ENCODE measurements at regions of chrX and their contacts with region 1.

Region 1: DNA sequence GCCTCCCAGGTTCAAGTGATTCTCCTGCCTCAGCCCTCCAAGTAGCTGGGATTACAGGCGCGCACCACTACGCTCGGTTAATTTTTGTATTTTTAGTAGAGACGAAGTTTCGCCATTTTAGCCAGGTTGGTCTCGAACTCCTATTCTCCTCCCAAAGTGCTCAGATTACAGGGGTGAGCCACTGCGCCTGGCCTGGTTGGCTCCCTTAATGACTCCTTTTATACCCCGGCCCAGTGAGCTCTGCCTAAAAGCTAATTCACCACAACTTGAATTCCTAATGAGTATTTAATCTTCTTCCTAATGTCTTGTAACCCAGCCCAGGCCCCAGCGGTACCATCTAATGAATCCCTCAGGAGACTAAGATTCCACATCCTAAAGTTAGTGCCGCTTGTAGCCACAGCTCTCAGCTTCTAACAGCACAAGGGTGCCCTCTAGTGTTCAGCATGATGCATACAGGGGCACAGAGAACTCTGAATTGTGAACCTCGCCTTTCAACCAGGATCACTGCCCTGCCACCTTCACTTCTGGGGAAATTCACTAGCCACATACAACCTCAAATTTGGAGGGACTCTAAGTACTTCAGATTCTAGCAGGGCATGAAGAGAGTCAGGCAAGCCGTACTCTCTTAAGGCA is 89.5 kb downstream of the OR13H1 start:
- DNase-seq: peak; percentile 79
- H3K4me3 Mint-ChIP-seq: no peak overlapping the region
- H3K27ac Mint-ChIP-seq: no peak overlapping the region
- H3K4me1 Mint-ChIP-seq: no peaks in the 10 kb centered on the region
- H3K27me3 Mint-ChIP-seq: peaks cover 9% of the 10 kb centered on the region
- CTCF ChIP-seq: peak; percentile 91

Region 2: GRCh38 chrX:130975947-130976346 is 657.5 kb before region 1 on chrX:
- CTCF ChIA-PET with region 1: interaction called, 6 read pairs
- POLR2A ChIA-PET with region 1: no interaction called
- intact Hi-C with region 1: loop called (anchors 1 kb)
- DNase-seq: peak; percentile 63
- H3K4me3 Mint-ChIP-seq: no peak overlapping the region
- H3K27ac Mint-ChIP-seq: no peak overlapping the region
- H3K4me1 Mint-ChIP-seq: no peaks in the 10 kb centered on the region
- H3K27me3 Mint-ChIP-seq: peaks cover 35% of the 10 kb centered on the region
- CTCF ChIP-seq: peak; percentile 65

Region 3: GRCh38 chrX:131262737-131263679 is 370.4 kb before region 1 on chrX:
- CTCF ChIA-PET with region 1: no interaction called
- POLR2A ChIA-PET with region 1: no interaction called
- intact Hi-C with region 1: loop called (anchors 1 kb)
- DNase-seq: peak; percentile 52
- H3K4me3 Mint-ChIP-seq: no peak overlapping the region
- H3K27ac Mint-ChIP-seq: no peak overlapping the region
- H3K4me1 Mint-ChIP-seq: no peaks in the 10 kb centered on the region
- H3K27me3 Mint-ChIP-seq: peaks cover 72% of the 10 kb centered on the region
- CTCF ChIP-seq: peak; percentile 45

Region 4: DNA sequence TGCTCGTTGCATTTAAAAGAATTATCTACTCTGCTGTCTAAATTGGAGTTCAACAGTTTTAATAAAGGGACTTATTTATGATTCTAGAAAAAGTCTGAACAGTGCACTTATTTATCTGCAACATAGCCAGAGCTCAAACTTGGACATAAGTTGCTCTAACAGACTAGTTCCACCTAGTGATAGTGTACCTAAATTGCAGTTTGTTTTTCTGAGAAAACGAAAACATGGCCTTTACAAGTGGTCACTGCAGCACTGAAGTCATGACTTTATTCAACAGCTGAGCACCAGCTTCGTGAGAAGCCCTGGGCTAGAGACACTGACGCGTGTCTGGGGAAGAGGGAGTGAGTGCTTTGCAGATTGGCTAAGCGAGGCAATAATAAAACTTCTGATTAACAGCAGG is 267.0 kb before region 1 on chrX:
- CTCF ChIA-PET with region 1: no interaction called
- POLR2A ChIA-PET with region 1: no interaction called
- intact Hi-C with region 1: loop called (anchors 10 kb)
- DNase-seq: peak; percentile 9
- H3K4me3 Mint-ChIP-seq: no peak overlapping the region
- H3K27ac Mint-ChIP-seq: no peak overlapping the region
- H3K4me1 Mint-ChIP-seq: no peaks in the 10 kb centered on the region
- H3K27me3 Mint-ChIP-seq: peaks cover 71% of the 10 kb centered on the region
- CTCF ChIP-seq: peak; percentile 5

Region 5: DNA sequence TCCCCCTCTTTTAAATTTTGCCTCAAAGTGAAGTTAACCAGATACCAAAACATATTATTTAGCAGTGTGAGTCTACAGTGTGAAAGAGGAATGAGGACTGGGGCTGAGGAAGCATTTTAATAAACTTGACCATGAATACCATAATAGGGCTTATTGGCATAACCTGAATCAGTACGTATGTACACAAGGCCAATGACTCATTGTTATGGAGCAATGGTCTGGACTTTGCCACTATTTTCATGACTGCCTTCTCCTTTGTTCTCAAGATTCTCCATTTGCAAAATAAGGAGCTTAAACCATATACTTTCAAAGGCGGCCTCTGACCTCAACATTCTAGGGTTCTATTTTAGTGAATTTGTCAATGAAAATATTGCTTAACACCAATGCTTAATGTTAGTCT is 192.4 kb before region 1 on chrX:
- CTCF ChIA-PET with region 1: no interaction called
- POLR2A ChIA-PET with region 1: no interaction called
- intact Hi-C with region 1: no loop called
- DNase-seq: peak; percentile 59
- H3K4me3 Mint-ChIP-seq: no peak overlapping the region
- H3K27ac Mint-ChIP-seq: no peak overlapping the region
- H3K4me1 Mint-ChIP-seq: no peaks in the 10 kb centered on the region
- H3K27me3 Mint-ChIP-seq: peaks cover 54% of the 10 kb centered on the region
- CTCF ChIP-seq: no peak

Region 6: GRCh38 chrX:131621650-131622049 is 11.8 kb before region 1 on chrX:
- CTCF ChIA-PET with region 1: interaction called, 13 read pairs
- POLR2A ChIA-PET with region 1: no interaction called
- intact Hi-C with region 1: no loop called
- DNase-seq: no peak
- H3K4me3 Mint-ChIP-seq: no peak overlapping the region
- H3K27ac Mint-ChIP-seq: no peak overlapping the region
- H3K4me1 Mint-ChIP-seq: no peaks in the 10 kb centered on the region
- H3K27me3 Mint-ChIP-seq: peaks cover under 1% of the 10 kb centered on the region
- CTCF ChIP-seq: no peak

Region 7: DNA sequence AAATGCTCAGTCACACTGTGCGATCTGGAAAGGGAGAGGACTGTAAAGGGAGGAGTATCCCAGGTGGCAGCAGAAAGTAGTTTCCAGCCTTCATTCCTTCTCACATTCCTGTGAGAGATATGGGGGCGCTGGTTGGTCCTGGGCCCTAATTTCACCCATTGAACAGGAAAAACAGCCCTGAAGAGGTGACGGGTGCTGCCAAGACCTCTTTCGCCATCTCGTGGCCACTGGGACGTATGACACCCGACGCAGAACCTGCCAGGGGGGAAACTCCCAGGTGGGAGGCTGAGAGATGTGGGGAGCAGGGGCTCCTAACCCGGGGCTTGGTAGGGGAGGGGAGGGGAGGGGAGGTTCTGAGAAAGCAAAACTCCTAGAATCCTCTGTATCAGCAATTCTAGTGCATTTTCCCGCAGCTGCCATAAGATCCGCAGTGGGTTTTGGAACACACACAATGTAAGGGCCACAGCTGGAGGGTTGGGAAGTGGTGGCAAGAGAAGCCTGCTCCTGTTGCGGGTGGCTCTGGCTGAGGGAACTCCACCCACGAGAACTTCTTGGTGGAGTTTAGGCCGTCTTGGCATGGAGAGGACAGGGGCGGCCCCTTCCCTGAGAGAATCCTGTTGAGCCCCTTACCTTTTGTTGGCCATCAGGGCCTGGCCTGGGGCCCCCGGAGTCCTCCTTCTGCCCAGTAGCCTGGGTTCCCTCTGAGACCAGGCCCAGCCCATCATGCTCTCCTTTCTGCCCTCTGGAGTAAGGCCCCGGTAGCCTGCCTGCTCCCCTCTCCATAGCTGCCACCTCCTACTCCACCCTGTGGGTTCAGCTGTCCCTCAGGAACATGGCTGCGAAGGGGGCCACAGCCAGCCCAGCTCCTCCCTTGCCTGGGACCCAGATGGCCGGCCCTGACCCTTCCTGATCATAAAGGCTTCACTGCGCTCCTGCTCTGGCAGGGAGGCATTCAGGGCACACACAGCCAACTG is 44.5 kb after region 1 on chrX:
- CTCF ChIA-PET with region 1: no interaction called
- POLR2A ChIA-PET with region 1: no interaction called
- intact Hi-C with region 1: loop called (anchors 1 kb)
- DNase-seq: peak; percentile 58
- H3K4me3 Mint-ChIP-seq: no peak overlapping the region
- H3K27ac Mint-ChIP-seq: no peak overlapping the region
- H3K4me1 Mint-ChIP-seq: no peaks in the 10 kb centered on the region
- H3K27me3 Mint-ChIP-seq: peaks cover 58% of the 10 kb centered on the region
- CTCF ChIP-seq: peak; percentile 79

Measured in MCF 10A (cell line).